Transverse colon (tissue), 4 donors: ENCODE measurements at regions of chr4 and their contacts with region 1.

Region 1: DNA sequence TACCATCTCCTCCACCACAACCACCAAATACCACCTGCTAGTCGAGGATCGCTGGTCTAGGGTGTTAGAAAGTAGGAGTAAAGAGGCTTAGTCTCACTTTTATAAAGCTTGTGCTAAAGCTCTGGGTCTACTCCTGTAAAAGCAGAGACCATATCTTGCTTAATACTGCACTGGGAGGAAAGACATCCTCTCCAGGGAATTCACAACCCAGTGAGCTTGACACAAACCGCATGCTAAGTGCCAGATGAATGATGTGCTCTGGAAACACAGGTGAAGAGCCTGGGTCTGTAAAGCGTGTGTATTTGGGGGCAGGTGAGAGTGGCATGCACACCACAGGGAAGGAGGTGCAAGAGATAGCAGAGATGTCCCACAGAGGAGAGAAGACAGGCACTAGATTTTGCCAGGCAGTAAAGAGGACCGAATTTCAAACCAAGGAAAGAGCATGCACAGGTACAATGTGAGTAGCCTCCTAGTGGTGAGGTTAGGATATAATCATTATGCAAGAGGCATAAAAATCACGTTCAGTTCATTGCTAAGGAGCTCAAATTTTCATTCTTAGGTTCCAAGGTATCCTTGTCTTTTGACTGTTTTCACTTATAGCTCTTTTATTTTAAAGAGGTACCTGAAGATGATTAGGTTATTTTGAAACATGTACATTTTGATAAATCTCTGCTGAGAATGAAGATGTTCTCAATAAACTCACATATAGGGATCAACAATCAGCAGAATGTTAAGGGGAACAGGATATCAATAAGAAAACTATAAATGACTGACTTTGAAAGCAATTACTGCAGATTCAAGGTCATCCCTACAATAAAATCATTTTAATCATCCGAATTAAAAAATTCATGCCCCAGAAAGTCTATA is 20.7 kb downstream of the TAPT1 start:
- DNase-seq: no peak
- H3K4me3 ChIP-seq: no peak overlapping the region
- H3K27ac ChIP-seq: no peak overlapping the region
- H3K4me1 ChIP-seq: peaks cover 0 to 13% (median 0%) of the 10 kb centered on the region in 4 donors
- H3K27me3 ChIP-seq: no peaks in the 10 kb centered on the region
- CTCF ChIP-seq: peak; percentile 55 to 71 (median 63)
- EP300 ChIP-seq: no peak
- POLR2A ChIP-seq: no peak

Region 2: GRCh38 chr4:14679906-14680305 is 1525.6 kb before region 1 on chr4:
- in situ Hi-C with region 1: no loop called
- intact Hi-C with region 1: loop called (anchors 5 kb)
- DNase-seq: no peak
- H3K4me3 ChIP-seq: no peak overlapping the region
- H3K27ac ChIP-seq: no peak overlapping the region
- H3K4me1 ChIP-seq: no peaks in the 10 kb centered on the region
- H3K27me3 ChIP-seq: no peaks in the 10 kb centered on the region
- CTCF ChIP-seq: no peak
- EP300 ChIP-seq: no peak
- POLR2A ChIP-seq: no peak

Region 3: GRCh38 chr4:15250021-15250441 is 955.5 kb before region 1 on chr4:
- in situ Hi-C with region 1: no loop called
- intact Hi-C with region 1: no loop called
- DNase-seq: no peak
- H3K4me3 ChIP-seq: no peak overlapping the region
- H3K27ac ChIP-seq: no peak overlapping the region
- H3K4me1 ChIP-seq: no peaks in the 10 kb centered on the region
- H3K27me3 ChIP-seq: no peaks in the 10 kb centered on the region
- CTCF ChIP-seq: no peak
- EP300 ChIP-seq: no peak
- POLR2A ChIP-seq: no peak

Region 4: DNA sequence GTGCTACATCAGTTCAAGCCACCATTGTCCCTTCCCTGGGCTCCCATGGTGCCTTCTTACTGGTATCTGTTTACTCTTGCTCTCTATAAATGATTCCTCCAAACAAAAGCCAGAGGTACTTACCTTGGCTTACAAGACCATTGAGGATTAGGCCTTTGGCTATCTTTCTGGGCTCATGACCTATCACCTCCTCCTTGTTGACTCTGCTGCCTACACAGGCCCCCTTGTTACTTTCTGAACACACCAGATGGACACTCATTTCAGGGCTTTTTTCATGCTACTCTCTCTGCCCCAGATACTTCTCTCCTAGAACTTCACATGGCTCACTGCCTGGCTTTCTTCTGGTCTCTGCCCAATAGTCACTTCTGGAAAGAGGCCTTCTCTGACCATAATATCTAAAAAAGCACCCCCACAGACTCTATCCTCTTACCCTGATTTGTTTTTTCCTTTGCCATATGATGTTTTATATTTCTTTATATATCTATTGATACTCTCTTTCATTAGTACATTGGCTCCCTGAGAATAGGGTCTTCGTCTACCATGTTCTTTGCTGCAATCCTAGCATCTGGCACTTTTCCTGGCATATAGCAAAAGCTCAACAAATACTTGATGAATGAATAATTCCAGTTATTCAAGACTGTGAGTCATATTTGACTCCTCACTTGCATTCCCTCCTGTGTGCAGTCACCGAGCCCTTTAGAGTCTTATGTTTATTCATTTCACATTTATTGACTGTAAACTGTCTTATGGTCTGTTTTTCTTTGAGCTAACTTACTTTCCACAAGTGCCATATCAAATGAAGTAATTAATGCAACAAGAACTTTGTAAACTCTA is 47.8 kb after region 1 on chr4:
- in situ Hi-C with region 1: no loop called
- intact Hi-C with region 1: no loop called
- DNase-seq: no peak
- H3K4me3 ChIP-seq: no peak overlapping the region
- H3K27ac ChIP-seq: no peak overlapping the region
- H3K4me1 ChIP-seq: peaks cover 0 to 8% (median 0%) of the 10 kb centered on the region in 4 donors
- H3K27me3 ChIP-seq: no peaks in the 10 kb centered on the region
- CTCF ChIP-seq: no peak
- EP300 ChIP-seq: no peak
- POLR2A ChIP-seq: no peak